WTC11 (cell line): ENCODE measurements at regions of chr15 and their contacts with region 1.

Region 1: GRCh38 chr15:57505949-57506391 is 85.7 kb upstream of the MYZAP start:
- DNase-seq: no peak
- ATAC-seq: peak; percentile 11
- H3K4me3 Mint-ChIP-seq: no peak overlapping the region
- H3K27ac Mint-ChIP-seq: peak overlapping the region; percentile 31; the same call in 1 of the 2 replicates
- H3K4me1 Mint-ChIP-seq: peaks cover 52% of the 10 kb centered on the region
- H3K27me3 Mint-ChIP-seq: no peaks in the 10 kb centered on the region
- CTCF ChIP-seq: no peak

Region 2: GRCh38 chr15:57364282-57365007 is 141.5 kb before region 1 on chr15:
- CTCF ChIA-PET with region 1: interaction called, 10 read pairs
- POLR2A ChIA-PET with region 1: interaction called, 3 read pairs
- DNase-seq: peak; percentile 56
- ATAC-seq: peak; percentile 86
- H3K4me3 Mint-ChIP-seq: no peak overlapping the region
- H3K27ac Mint-ChIP-seq: peak overlapping the region; percentile 81
- H3K4me1 Mint-ChIP-seq: peaks cover 26% of the 10 kb centered on the region
- H3K27me3 Mint-ChIP-seq: no peaks in the 10 kb centered on the region; the same call in 1 of the 2 replicates
- CTCF ChIP-seq: no peak

Region 3: GRCh38 chr15:57476533-57476975 is 29.4 kb before region 1 on chr15:
- CTCF ChIA-PET with region 1: interaction called, 16 read pairs
- POLR2A ChIA-PET with region 1: no interaction called
- DNase-seq: no peak
- ATAC-seq: no peak
- H3K4me3 Mint-ChIP-seq: no peak overlapping the region
- H3K27ac Mint-ChIP-seq: peak overlapping the region; percentile 57; the same call in 1 of the 2 replicates
- H3K4me1 Mint-ChIP-seq: peaks cover 35% of the 10 kb centered on the region
- H3K27me3 Mint-ChIP-seq: no peaks in the 10 kb centered on the region
- CTCF ChIP-seq: no peak

Region 4: DNA sequence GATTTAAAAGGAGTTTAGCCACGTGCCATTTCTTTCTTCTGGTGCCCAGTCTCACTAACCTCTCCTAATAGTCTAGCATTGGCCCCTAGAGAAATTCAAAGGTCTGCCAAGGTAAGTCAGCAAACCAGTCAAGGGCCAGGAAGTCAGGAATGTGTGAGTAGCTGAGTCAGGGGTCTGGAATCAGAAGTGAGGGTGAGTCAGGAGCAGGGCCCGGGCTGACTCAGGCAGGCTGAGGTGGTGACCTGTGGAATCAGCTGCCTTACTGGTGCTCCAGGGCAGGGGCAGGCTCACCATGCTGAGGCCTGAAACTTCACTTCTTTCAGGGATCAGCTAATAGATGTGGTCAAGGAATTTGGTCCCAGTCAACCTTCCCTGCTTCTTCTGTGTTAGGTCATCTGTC is 20.1 kb before region 1 on chr15:
- CTCF ChIA-PET with region 1: interaction called, 11 read pairs
- POLR2A ChIA-PET with region 1: no interaction called
- DNase-seq: peak; percentile 44
- ATAC-seq: peak; percentile 96
- H3K4me3 Mint-ChIP-seq: no peak overlapping the region
- H3K27ac Mint-ChIP-seq: peak overlapping the region; percentile 57; the same call in 1 of the 2 replicates
- H3K4me1 Mint-ChIP-seq: peaks cover 21% of the 10 kb centered on the region
- H3K27me3 Mint-ChIP-seq: no peaks in the 10 kb centered on the region
- CTCF ChIP-seq: no peak